ENCODE measurements at regions of chr12 and their contacts with region 1.

Region 1: DNA sequence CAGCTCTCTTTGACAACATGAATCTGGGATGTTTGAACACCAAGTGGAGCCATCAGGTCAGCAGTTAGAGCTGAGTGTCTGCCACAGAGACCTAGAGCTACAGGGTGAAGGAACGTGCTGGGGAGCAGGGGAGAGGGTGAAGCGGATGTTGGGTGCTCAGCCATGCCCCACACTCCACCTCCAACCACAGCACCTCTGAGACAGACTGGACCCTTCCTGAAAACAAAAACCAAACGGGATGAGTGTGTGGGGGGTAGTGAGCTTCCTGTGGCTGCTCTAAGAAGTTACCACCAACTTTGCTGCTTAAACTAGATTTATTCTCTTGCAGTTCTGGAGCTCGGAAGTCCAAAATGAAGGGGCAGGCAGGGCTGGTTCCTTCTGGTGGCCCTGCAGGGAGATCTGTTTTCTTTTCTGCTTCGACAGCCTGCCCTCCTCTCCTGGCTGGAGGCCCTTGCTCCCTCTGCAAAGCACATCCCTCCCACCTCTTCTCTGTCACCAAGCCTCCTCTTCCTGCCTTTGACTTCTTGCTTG is 5.6 kb upstream of the GOLGA3 start:
- DNase-seq: no peak
- H3K4me3 ChIP-seq: no peak overlapping the region
- H3K4me3 Mint-ChIP-seq: no peak overlapping the region
- H3K27ac Mint-ChIP-seq: no peak overlapping the region
- H3K4me1 ChIP-seq: peaks cover 4% of the 10 kb centered on the region; the same call in 1 of the 2 replicates
- H3K4me1 Mint-ChIP-seq: no peaks in the 10 kb centered on the region
- H3K27me3 ChIP-seq: no peaks in the 10 kb centered on the region
- H3K27me3 Mint-ChIP-seq: no peaks in the 10 kb centered on the region
- CTCF ChIP-seq: no peak

Region 2: GRCh38 chr12:132788375-132789098 is 45.7 kb before region 1 on chr12:
- CTCF ChIA-PET with region 1: no interaction called
- POLR2A ChIA-PET with region 1: no interaction called
- intact Hi-C with region 1: no loop called
- DNase-seq: no peak
- H3K4me3 ChIP-seq: no peak overlapping the region
- H3K4me3 Mint-ChIP-seq: no peak overlapping the region
- H3K27ac Mint-ChIP-seq: no peak overlapping the region
- H3K4me1 ChIP-seq: no peaks in the 10 kb centered on the region
- H3K4me1 Mint-ChIP-seq: no peaks in the 10 kb centered on the region
- H3K27me3 ChIP-seq: no peaks in the 10 kb centered on the region
- H3K27me3 Mint-ChIP-seq: no peaks in the 10 kb centered on the region
- CTCF ChIP-seq: no peak

Region 3: DNA sequence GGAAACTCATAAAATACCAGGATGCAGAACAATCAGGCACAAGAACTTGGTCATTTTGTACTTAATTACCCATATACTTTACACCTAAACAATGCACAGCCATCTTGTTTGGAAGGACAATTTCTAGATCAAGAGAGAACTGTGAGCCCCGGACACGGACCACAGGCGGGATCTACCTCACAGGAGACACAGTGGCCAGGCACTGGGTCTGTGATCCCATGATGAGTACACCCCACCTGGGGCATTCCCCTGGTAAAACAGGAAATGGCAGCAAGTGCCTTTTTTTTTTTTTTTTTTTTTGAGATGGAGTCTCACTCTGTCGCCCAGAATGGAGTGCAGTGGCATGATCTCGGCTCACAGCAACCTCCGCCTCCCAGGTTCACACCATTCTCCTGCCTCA is 20.8 kb before region 1 on chr12:
- CTCF ChIA-PET with region 1: no interaction called
- POLR2A ChIA-PET with region 1: interaction called, 16 read pairs
- intact Hi-C with region 1: no loop called
- DNase-seq: no peak
- H3K4me3 ChIP-seq: no peak overlapping the region
- H3K4me3 Mint-ChIP-seq: no peak overlapping the region
- H3K27ac Mint-ChIP-seq: no peak overlapping the region
- H3K4me1 ChIP-seq: no peaks in the 10 kb centered on the region
- H3K4me1 Mint-ChIP-seq: no peaks in the 10 kb centered on the region
- H3K27me3 ChIP-seq: no peaks in the 10 kb centered on the region
- H3K27me3 Mint-ChIP-seq: no peaks in the 10 kb centered on the region
- CTCF ChIP-seq: no peak

Measured in Caco-2 (cell line).